K562 (cell line): ENCODE measurements at regions of chr10 and their contacts with region 1.

Region 1: GRCh38 chr10:87861953-87862678 is 1.2 kb downstream of the KLLN start:
- DNase-seq: peak; percentile 79 to 94 (median 83)
- ATAC-seq: peak; percentile 60
- H3K4me3 ChIP-seq: peak overlapping the region; percentile 88
- H3K27ac ChIP-seq: peak overlapping the region; percentile 79
- H3K4me1 ChIP-seq: peaks cover 3 to 11% of the 10 kb centered on the region in 2 experiments; a peak in 4 of 5 replicates
- H3K27me3 ChIP-seq: no peaks in the 10 kb centered on the region
- CTCF ChIP-seq: no peak
- EP300 ChIP-seq: no peak
- POLR2A ChIP-seq: peak; percentile 78
- RAD21 ChIP-seq: no peak

Region 2: GRCh38 chr10:87685832-87686574 is 176.1 kb before region 1 on chr10:
- CTCF ChIA-PET with region 1: no interaction called
- POLR2A ChIA-PET with region 1: no interaction called
- in situ Hi-C with region 1: no loop called
- intact Hi-C with region 1: no loop called
- DNase-seq: no peak
- ATAC-seq: no peak
- H3K4me3 ChIP-seq: no peak overlapping the region
- H3K27ac ChIP-seq: no peak overlapping the region
- H3K4me1 ChIP-seq: peaks cover 0 to 3% of the 10 kb centered on the region in 2 experiments; a peak in 3 of 5 replicates
- H3K27me3 ChIP-seq: peaks cover 0 to under 1% of the 10 kb centered on the region in 2 experiments; a peak in 1 of 5 replicates
- CTCF ChIP-seq: no peak
- EP300 ChIP-seq: no peak
- POLR2A ChIP-seq: no peak
- RAD21 ChIP-seq: no peak

Region 3: DNA sequence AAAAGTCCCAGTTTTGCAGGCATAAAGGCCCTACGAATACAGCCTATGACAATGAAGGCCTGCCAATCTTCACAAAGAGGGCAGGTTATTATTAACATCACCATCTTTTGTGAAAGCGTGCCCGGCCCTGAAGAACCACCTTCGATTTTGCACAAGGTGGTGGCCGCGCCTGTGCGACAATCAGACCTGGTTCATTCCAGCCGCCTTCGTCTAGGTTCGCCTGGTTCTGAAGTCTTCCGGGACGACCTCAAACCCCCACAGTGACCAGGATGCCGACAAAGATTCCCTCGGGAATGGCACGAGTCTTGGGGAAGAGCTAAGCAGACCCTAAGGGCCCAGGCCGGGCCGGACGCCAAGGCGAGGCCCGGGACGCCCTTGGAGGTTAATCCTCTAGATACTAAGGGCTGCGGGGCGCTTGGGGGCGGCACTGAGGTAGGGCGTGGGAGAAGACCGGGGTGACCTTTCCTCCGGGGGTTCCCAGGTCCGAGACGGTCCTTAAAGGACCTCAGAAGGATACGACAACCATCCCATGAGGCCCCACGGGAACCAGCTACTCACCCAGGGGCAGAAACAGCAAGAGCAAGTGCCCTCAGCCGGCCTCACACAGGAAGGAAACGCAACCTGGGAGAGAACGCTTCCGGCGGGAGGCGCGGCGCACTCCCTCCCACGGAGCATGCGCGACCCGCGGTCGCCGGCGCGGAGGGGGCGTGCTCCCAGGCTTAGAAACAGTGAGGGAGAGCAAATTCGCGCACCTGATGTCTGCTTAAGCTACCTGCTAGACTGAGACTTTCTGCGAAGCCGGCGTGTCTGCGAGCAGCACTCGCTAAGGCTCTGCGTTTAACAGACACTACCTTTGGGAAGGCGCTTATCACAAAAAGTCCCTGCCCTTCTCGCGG is 44.3 kb before region 1 on chr10 and contains the start of gene ATAD1:
- CTCF ChIA-PET with region 1: interaction called, 3 read pairs
- POLR2A ChIA-PET with region 1: interaction called, 3 read pairs
- in situ Hi-C with region 1: no loop called
- intact Hi-C with region 1: loop called (anchors 5 kb)
- DNase-seq: peak; percentile 76 to 89 (median 84)
- ATAC-seq: peak; percentile 93
- H3K4me3 ChIP-seq: peak within 1 kb of the TSS; percentile 49
- H3K27ac ChIP-seq: peak within 1 kb of the TSS; percentile 77
- H3K4me1 ChIP-seq: peaks cover 3 to 5% of the 10 kb centered on the region in 2 experiments; a peak in 3 of 5 replicates
- H3K27me3 ChIP-seq: no peaks in the 10 kb centered on the region
- CTCF ChIP-seq: peak in 2 of 3 experiments; percentile 25 to 47; a peak in 3 of 6 replicates
- EP300 ChIP-seq: no peak
- POLR2A ChIP-seq: peak; percentile 88
- RAD21 ChIP-seq: no peak
- polyA plus RNA-seq, gene ATAD1: 27.3 to 31.0 TPM

Region 4: GRCh38 chr10:87925570-87925969 is 63.5 kb after region 1 on chr10:
- CTCF ChIA-PET with region 1: no interaction called
- POLR2A ChIA-PET with region 1: no interaction called
- in situ Hi-C with region 1: no loop called
- intact Hi-C with region 1: loop called (anchors 5 kb)
- DNase-seq: no peak
- ATAC-seq: no peak
- H3K4me3 ChIP-seq: no peak overlapping the region
- H3K27ac ChIP-seq: no peak overlapping the region
- H3K4me1 ChIP-seq: peaks cover 0 to 2% of the 10 kb centered on the region in 2 experiments; a peak in 2 of 5 replicates
- H3K27me3 ChIP-seq: no peaks in the 10 kb centered on the region
- CTCF ChIP-seq: no peak
- EP300 ChIP-seq: no peak
- POLR2A ChIP-seq: no peak
- RAD21 ChIP-seq: no peak

Region 5: GRCh38 chr10:88114368-88114767 is 252.3 kb after region 1 on chr10:
- CTCF ChIA-PET with region 1: interaction called, 3 read pairs
- POLR2A ChIA-PET with region 1: interaction called, 5 read pairs
- in situ Hi-C with region 1: no loop called
- intact Hi-C with region 1: loop called (anchors 1 kb)
- DNase-seq: peak; percentile 24 to 51 (median 32)
- ATAC-seq: peak; percentile 95
- H3K4me3 ChIP-seq: no peak overlapping the region
- H3K27ac ChIP-seq: no peak overlapping the region
- H3K4me1 ChIP-seq: no peaks in the 10 kb centered on the region; a peak in 1 of 5 replicates
- H3K27me3 ChIP-seq: peaks cover 0 to 3% of the 10 kb centered on the region in 2 experiments; a peak in 2 of 5 replicates
- CTCF ChIP-seq: peak; percentile 47 to 61 (median 56)
- EP300 ChIP-seq: no peak
- POLR2A ChIP-seq: no peak
- RAD21 ChIP-seq: peak; percentile 73 to 82